A549 (cell line): ENCODE measurements at regions of chr6 and their contacts with region 1.

Region 1: DNA sequence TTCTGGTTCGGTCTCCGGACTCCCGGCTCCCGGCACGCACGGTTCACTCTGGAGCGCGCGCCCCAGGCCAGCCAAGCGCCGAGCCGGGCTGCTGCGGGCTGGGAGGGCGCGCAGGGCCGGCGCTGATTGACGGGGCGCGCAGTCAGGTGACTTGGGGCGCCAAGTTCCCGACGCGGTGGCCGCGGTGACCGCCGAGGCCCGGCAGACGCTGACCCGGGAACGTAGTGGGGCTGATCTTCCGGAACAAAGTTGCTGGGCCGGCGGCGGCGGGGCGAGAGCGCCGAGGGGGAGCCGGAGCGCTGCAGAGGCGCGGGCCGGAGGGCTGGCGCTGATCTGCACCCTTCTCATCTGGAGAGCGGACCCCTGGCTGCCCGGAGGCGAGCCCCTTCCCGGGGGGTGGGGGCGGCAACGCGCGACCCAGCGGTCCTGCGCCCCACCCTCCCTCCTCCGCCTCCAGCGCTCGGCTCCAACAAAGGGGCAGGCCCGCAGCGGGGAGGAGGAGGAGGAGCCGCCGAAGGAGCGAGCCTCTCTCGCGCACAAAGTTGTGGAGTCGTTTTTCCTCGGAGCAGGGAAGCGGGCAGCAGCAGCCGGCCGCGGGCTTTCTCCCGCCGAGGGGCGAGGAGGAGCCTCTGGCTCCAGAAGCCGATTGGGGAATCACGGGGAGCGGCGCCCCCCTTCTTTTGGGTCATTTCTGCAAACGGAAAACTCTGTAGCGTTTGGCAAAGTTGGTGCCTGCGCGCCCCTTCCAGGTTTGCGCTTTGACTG is at the start of gene UTRN:
- DNase-seq: peak; percentile 57 to 80
- ATAC-seq: peak; percentile 78 to 84
- H3K4me3 ChIP-seq: peak within 1 kb of the TSS; percentile 83
- H3K27ac ChIP-seq: peak within 1 kb of the TSS; percentile 97 to 98
- H3K4me1 ChIP-seq: peaks cover 13% of the 10 kb centered on the region; the same call in 2 of the 3 replicates
- CTCF ChIP-seq: no peak
- EP300 ChIP-seq: no peak
- POLR2A ChIP-seq: no peak
- RAD21 ChIP-seq: no peak; a peak in 2 of 5 replicates
- polyA plus RNA-seq, gene UTRN: 20.8 and 30.6 TPM in 2 replicates

Region 2: GRCh38 chr6:144215932-144216667 is 68.9 kb before region 1 on chr6:
- CTCF ChIA-PET with region 1: interaction called, 7 read pairs
- POLR2A ChIA-PET with region 1: interaction called, 17 read pairs
- DNase-seq: peak; percentile 67 to 96
- ATAC-seq: peak; percentile 94 to 95
- H3K4me3 ChIP-seq: peak overlapping the region; percentile 45
- H3K27ac ChIP-seq: peak overlapping the region; percentile 88 to 93
- H3K4me1 ChIP-seq: peaks cover 8% of the 10 kb centered on the region
- CTCF ChIP-seq: peak; percentile 58
- EP300 ChIP-seq: no peak
- POLR2A ChIP-seq: no peak
- RAD21 ChIP-seq: peak; percentile 47 to 81

Region 3: GRCh38 chr6:144482142-144482541 is 197.2 kb after region 1 on chr6:
- CTCF ChIA-PET with region 1: interaction called, 3 read pairs
- POLR2A ChIA-PET with region 1: interaction called, 17 read pairs
- DNase-seq: peak; percentile 37 to 74
- ATAC-seq: peak; percentile 80 to 83; a peak in 5 of 6 replicates
- H3K4me3 ChIP-seq: no peak overlapping the region
- H3K27ac ChIP-seq: no peak overlapping the region
- H3K4me1 ChIP-seq: no peaks in the 10 kb centered on the region
- CTCF ChIP-seq: peak; percentile 72
- EP300 ChIP-seq: no peak
- POLR2A ChIP-seq: no peak
- RAD21 ChIP-seq: peak; percentile 78 to 80